ENCODE measurements at regions of chr19 and their contacts with region 1.

Region 1: DNA sequence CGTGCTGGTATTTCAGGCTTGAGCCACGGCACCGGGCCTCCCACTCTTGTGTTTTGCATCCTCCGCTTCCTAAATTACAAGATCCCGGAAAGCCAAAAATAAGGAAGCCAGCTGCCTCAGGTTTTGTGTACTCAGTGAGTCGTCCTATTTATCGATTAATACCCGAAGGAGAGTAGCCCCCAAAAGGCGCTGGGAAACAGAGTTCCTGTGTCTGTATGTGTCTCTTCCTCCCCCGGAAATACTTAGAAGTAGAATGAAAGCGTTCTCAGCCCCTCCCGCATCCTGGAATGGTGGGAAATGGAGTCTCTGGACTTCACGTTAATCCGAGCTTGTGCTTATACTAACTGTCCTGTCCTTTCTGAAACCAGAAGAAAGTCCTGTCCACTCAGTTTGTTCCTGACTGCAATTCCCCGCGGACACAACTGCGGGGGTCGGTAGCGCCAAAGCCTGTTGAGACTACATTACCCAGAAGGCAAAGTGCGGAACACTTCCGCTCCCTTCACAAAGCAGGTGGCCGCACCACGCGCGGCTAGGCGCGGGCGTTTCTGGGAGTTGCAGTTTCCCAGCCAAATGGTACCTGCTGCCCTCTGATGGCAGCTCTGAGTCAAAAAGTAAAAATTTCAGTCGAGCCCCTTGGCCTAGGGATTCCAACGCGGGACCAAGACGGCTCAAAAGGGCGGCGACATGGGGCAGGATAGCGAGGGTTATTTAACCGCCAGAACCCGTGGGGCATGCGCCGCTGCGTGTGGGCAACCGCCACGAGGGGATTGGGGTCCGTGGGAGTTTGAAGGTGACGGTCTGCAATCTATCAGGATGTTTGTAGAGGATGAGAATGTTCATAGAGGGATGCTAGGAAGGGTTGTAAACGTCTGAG is 2.2 kb upstream of the GSK3A start:
- DNase-seq: peak; percentile 96 to 97
- ATAC-seq: peak; percentile 70
- H3K4me3 ChIP-seq: peak overlapping the region; percentile 28 to 35
- H3K27ac ChIP-seq: peak overlapping the region in 1 of 2 donors; percentile 89
- H3K4me1 ChIP-seq: peaks cover 0 to 2% of the 10 kb centered on the region in 2 donors
- H3K27me3 ChIP-seq: no peaks in the 10 kb centered on the region

Region 2: GRCh38 chr19:42268704-42269477 is 24.3 kb after region 1 on chr19 and contains the start of gene CIC:
- intact Hi-C with region 1: loop called in 1 of 2 experiments (anchors 1 kb)
- DNase-seq: peak; percentile 99 to 100
- ATAC-seq: peak; percentile 95
- H3K4me3 ChIP-seq: peak within 1 kb of the TSS; percentile 50 to 76
- H3K27ac ChIP-seq: peak within 1 kb of the TSS; percentile 73 to 97
- H3K4me1 ChIP-seq: peaks cover 0 to 1% of the 10 kb centered on the region in 2 donors
- H3K27me3 ChIP-seq: no peaks in the 10 kb centered on the region
- total RNA-seq, gene CIC: 103 to 104 TPM

Region 3: GRCh38 chr19:42277821-42278451 is 33.4 kb after region 1 on chr19:
- intact Hi-C with region 1: loop called (anchors 2 kb)
- DNase-seq: peak in 1 of 2 donors; percentile 78
- ATAC-seq: no peak
- H3K4me3 ChIP-seq: no peak overlapping the region
- H3K27ac ChIP-seq: peak overlapping the region; percentile 23 to 71
- H3K4me1 ChIP-seq: no peaks in the 10 kb centered on the region
- H3K27me3 ChIP-seq: no peaks in the 10 kb centered on the region

Region 4: GRCh38 chr19:42283143-42284065 is 38.8 kb after region 1 on chr19:
- intact Hi-C with region 1: loop called in 1 of 2 experiments (anchors 2 kb)
- DNase-seq: peak; percentile 97 to 98
- ATAC-seq: peak; percentile 74
- H3K4me3 ChIP-seq: peak overlapping the region; percentile 34 to 72
- H3K27ac ChIP-seq: peak overlapping the region; percentile 28 to 68
- H3K4me1 ChIP-seq: peaks cover 0 to 3% of the 10 kb centered on the region in 2 donors
- H3K27me3 ChIP-seq: no peaks in the 10 kb centered on the region

Region 5: DNA sequence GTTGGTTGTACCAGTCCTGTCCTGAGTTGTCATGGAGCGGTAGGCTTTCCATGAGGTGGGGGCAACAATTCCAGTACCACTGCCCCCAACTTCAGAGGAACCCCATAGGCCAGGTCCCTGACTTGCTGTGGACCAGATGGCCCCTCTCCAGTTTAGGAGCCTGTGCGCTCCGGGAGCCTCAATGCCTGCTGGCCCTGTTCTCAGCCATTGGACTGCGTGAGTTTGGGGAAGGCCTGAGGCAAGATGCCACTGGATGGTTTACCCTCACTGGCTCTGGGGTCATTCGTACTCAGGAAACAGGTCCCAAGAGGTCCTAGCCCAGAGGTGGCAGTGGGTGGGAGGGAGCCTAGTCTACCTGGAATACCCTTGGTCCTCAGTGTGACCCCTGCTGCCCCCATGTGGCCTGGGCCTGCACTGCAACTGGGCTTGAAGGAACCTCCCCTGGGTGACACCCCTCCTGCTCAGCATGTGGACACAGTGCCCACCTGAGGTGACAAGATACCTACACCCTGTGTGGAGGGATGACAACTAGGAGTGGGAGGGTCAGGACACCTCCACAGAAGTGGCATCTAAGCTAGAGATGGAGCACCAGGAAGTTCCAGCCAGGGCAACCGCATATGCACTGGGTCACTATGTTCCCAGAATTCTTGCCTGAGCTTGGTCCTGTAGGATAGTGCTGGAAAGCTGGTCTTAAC is 51.4 kb after region 1 on chr19:
- intact Hi-C with region 1: loop called in 1 of 2 experiments (anchors 5 kb)
- DNase-seq: peak; percentile 84 to 96
- ATAC-seq: peak; percentile 82
- H3K4me3 ChIP-seq: no peak overlapping the region
- H3K27ac ChIP-seq: no peak overlapping the region
- H3K4me1 ChIP-seq: no peaks in the 10 kb centered on the region
- H3K27me3 ChIP-seq: no peaks in the 10 kb centered on the region

Region 6: DNA sequence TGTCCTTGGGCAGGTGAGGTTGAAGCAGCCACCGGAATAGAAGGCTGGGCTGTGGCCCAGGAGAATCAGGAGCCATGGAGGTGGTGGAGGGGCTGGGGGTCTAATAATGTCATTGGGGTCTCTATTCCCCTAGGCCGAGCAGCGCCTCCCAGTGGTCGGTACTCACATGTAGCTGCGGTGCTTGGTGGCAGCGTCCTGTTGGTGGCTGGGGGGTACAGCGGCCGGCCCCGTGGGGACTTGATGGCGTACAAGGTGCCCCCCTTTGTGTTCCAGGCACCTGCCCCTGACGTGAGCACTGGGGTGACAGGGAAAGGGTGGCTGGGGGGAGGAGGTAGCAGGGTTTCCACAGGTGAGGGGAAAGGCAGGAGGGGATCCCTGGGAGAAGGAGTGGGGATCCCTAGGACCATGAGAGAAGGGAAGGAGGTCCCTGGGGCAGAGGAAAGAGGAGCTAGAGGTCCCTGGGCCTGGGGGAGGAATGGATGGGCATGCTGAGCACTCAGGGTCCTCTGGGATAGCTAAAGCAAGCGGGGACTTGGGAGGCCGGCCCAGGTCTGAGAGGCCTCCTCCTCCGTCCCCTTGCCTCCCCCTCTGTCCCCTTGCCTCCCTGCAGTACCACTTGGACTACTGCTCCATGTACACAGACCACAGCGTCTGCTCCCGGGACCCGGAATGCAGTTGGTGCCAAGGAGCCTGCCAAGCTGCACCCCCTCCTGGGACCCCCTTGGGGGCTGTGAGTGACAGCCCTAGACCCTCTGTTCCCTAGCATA is 98.9 kb after region 1 on chr19:
- intact Hi-C with region 1: no loop called
- DNase-seq: no peak
- ATAC-seq: no peak
- H3K4me3 ChIP-seq: no peak overlapping the region
- H3K27ac ChIP-seq: no peak overlapping the region
- H3K4me1 ChIP-seq: no peaks in the 10 kb centered on the region
- H3K27me3 ChIP-seq: no peaks in the 10 kb centered on the region

Region 7: DNA sequence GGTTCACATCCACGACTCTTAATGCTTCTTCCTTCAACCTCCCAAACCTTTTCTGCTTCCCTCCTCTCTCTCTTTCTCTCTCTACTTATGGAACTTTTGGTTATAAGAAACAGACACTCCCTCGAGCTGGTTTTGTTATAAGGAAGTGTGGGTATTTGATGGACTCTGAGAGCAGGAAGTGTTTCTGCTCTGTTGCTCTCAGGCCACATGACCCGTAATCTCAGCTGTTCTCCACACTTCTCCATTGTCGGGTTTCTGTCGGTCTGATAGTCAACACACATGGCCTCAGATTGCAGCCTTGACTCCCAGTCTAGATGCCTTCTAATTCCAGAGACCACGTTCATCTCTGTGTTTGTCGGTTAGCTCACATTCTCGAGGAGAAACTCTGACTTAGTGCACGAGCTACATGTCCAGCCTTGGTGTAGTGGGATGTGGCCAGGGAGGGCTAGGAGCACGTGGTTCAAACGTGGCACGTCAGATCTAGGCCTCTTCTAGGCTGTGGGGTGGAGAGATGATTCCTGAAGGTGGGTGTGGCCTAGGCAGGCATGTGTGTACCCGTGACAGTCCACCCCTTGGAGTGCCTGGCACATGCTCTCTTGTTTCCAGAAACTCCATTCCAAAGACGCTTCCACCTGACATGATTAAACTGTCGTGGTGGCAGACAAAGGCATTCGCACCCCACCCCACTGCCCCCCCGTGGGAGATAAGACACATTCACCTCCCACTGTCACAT is 119.2 kb after region 1 on chr19:
- intact Hi-C with region 1: no loop called
- DNase-seq: no peak
- ATAC-seq: no peak
- H3K4me3 ChIP-seq: no peak overlapping the region
- H3K27ac ChIP-seq: no peak overlapping the region
- H3K4me1 ChIP-seq: no peaks in the 10 kb centered on the region
- H3K27me3 ChIP-seq: no peaks in the 10 kb centered on the region